Astrocyte of the cerebellum (primary cell): ENCODE measurements at regions of chr17 and their contacts with region 1.

Region 1: DNA sequence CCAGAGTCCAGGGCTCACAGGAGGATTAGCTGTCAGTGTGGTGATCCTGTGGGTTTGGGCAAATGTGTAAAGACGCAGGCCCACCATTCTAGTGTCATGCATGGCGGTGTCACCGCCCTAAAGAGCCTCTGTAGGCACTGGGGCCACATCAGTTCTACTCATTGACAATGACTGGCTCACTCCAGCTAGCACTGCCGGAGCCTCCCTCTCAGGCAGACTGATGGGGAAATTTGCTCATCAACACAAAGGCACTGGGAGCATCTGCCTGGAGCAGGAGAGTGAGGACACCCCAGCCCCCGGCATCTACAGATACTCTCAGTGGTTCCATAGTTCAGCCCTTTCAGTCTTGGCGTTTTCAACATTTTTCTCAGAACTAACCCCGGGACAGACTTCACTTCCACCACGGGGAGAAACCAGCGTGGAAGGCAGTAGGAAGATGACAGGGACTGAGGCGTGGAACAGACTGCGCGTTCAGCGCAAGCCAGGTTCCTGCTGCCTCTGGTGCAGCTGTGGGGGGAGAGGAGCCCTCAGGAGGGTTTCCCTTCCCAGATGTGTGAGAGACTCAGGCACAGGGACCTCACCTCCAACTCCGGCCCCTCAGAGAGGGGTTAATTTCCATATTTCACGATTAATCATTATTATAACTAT is 256.6 kb downstream of the RBFOX3 start:
- DNase-seq: no peak
- H3K4me3 ChIP-seq: no peak overlapping the region
- CTCF ChIP-seq: no peak

Region 2: DNA sequence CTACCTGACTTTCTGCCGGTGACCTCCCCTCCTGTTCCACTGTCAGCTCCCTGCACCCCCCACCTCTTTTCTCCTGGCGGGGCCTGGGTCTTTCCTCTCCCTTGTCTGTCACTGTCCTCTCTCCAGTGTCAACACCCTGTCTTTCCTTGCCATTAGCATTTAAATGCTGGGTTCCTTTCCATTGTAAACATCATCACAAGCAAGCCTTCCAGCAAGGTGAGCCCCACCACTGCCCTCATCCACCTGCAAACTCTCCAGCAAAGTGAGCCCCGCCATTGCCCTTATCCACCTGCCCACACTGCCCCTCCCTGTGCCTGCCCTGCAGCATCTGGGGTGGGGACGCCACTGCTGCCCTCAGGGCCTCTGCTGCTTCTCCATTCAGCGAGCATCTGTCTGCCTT is 84.7 kb before region 1 on chr17:
- in situ Hi-C with region 1: loop called (anchors 5 kb)
- DNase-seq: no peak
- H3K4me3 ChIP-seq: no peak overlapping the region
- CTCF ChIP-seq: no peak

Region 3: GRCh38 chr17:79305768-79306423 is 48.4 kb before region 1 on chr17:
- in situ Hi-C with region 1: no loop called
- DNase-seq: no peak
- H3K4me3 ChIP-seq: no peak overlapping the region
- CTCF ChIP-seq: no peak

Region 4: GRCh38 chr17:79433379-79433778 is 79.1 kb after region 1 on chr17:
- in situ Hi-C with region 1: loop called (anchors 5 kb)
- DNase-seq: no peak
- H3K4me3 ChIP-seq: no peak overlapping the region
- CTCF ChIP-seq: no peak